ENCODE measurements at regions of chr6 and their contacts with region 1.

Region 1: DNA sequence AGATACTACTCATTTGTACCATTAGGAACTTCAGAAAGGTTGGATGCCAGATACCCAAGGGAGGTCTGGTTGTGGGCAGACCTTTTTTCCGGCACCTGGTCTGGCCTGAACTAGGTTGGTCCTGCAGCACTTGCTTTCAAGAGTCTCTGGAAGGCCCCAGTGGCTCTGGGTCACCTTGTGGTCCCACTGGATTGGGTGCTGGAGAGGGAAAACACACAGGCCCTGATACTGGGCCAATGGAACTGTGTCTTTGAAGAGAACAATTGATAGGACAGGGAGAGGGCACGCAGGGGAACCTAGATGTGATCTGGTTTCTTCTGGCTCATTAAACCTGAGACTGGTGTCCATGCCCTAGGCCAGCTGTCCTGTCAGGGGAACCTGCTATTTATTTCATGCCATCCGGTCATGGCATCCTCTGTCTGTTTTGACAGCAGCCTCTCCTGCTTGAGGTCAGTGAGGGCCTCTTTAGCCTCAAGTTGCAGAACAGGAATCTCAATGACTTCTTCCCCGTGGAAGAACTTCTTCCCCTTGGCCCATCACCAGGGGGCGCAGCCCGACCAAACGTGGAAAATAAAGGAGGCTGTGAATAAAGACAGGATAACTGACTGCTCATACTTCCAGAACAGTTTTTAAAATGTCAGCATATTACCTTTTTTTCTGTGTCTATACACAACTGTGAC is 25.0 kb downstream of the TAF8 start:
- DNase-seq: peak; percentile 69
- ATAC-seq: peak; percentile 93
- H3K4me3 ChIP-seq: no peak overlapping the region
- H3K27ac ChIP-seq: no peak overlapping the region
- H3K4me1 ChIP-seq: no peaks in the 10 kb centered on the region
- H3K27me3 ChIP-seq: no peaks in the 10 kb centered on the region
- CTCF ChIP-seq: peak; percentile 96
- POLR2A ChIP-seq: no peak
- RAD21 ChIP-seq: peak; percentile 96

Region 2: DNA sequence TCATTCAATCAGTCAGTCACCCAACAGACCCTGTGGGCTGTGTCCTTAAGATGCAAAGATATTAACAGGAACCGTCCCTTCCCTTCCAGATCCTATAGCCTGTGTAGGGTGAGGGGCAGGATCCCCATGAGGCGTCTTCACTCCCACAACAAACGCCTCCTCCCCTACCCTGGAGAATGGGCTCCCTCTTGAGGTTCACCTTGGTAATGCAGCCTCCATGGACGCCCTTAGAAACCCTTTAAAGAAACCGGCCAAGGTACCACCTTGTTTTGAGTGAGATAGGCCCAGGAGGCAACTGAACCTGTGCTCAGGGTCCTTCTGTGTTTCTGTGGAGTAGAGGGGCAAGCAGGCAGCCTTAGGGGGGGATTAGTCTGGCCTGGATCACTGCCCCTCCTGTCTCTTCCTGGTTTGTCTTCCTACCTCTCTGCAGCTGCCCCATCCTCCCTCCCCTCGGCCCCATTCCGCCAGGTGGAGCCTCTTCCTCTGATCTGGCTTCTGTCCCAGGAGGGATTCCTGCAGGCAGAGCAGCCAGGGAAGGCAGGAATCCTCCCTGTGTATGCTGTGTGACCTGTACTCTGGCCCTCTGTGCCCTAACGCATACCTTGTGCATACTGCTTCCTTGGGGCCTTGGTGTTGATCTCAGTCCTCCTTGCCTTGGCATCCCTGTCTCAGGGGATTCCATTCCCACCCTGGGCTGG is 91.3 kb after region 1 on chr6:
- CTCF ChIA-PET with region 1: interaction called, 3 read pairs
- POLR2A ChIA-PET with region 1: no interaction called
- dilution Hi-C with region 1: no loop called
- in situ Hi-C with region 1: loop called (anchors 5 kb)
- intact Hi-C with region 1: loop called (anchors 1 kb)
- DNase-seq: peak; percentile 55
- ATAC-seq: peak; percentile 89
- H3K4me3 ChIP-seq: no peak overlapping the region
- H3K27ac ChIP-seq: no peak overlapping the region
- H3K4me1 ChIP-seq: peaks cover 9% of the 10 kb centered on the region
- H3K27me3 ChIP-seq: no peaks in the 10 kb centered on the region
- CTCF ChIP-seq: peak; percentile 94
- POLR2A ChIP-seq: peak; percentile 50; the same call in 1 of the 2 replicates
- RAD21 ChIP-seq: peak; percentile 97

Region 3: DNA sequence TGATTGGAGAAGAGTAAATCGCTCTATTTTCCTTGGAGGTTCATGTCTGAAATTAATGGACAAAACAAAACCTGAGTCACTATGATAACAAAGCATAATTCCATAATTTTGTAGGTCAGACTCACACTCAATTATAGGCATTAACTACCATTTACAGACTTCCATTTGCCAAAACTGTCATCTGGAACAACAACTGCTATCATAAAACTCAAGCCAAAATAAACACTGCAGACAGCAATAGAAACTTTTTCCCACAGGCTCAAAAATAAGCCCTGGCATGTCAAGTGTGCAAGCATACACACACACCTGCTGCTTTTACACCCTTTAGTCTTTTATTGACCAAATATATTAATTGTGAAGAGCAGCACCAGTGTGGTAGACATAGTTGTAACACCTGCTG is 135.3 kb after region 1 on chr6:
- CTCF ChIA-PET with region 1: no interaction called
- POLR2A ChIA-PET with region 1: no interaction called
- dilution Hi-C with region 1: no loop called
- in situ Hi-C with region 1: loop called (anchors 5 kb)
- intact Hi-C with region 1: loop called (anchors 1 kb)
- DNase-seq: no peak
- ATAC-seq: no peak
- H3K4me3 ChIP-seq: no peak overlapping the region
- H3K27ac ChIP-seq: no peak overlapping the region
- H3K4me1 ChIP-seq: no peaks in the 10 kb centered on the region
- H3K27me3 ChIP-seq: no peaks in the 10 kb centered on the region
- CTCF ChIP-seq: no peak
- POLR2A ChIP-seq: no peak
- RAD21 ChIP-seq: no peak

Region 4: DNA sequence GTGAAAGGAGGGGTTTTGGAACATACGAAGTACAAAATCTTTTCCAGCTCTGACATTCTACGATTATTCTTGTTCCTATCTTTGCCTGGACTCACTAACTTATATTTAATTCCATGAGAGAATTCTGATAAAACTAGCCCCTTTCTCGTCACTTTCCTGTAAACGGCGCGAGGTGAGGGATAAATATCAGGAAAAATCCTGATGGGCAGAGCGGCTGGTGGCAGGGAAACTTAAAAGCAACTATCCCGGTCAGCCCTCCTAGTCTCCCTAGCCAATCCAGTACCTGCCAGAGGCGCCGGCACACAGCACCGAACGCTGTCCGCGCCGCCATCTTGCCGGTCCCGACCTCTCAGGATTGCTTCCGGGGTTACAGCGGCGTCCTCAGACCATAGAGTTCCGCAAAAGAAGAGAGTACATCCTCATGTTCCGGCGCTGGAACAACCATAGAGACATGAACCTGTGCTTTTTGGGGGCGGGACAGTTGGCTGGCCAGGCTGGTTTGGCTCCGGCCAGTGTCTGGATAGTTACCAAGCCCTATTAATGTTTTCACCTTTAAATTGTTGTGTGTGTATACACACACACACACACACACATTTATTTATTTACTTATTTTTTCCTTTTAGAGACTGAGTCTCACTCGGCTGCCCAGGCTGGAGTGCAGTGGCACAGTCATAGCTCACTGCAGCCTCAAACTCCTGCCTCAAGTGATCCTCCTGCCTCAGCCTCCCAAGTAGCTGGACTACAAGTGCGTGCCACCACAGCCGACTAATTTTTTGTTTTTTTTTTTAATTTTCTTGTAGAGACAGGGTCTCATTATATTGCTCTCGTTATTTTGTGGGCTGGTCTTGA is 142.4 kb after region 1 on chr6 and contains the start of gene MRPS10:
- CTCF ChIA-PET with region 1: no interaction called
- POLR2A ChIA-PET with region 1: no interaction called
- dilution Hi-C with region 1: no loop called
- in situ Hi-C with region 1: loop called (anchors 5 kb)
- intact Hi-C with region 1: loop called (anchors 1 kb)
- DNase-seq: peak; percentile 94
- ATAC-seq: peak; percentile 98
- H3K4me3 ChIP-seq: peak within 1 kb of the TSS; percentile 82
- H3K27ac ChIP-seq: peak within 1 kb of the TSS; percentile 83
- H3K4me1 ChIP-seq: peaks cover 2% of the 10 kb centered on the region; the same call in 1 of the 2 replicates
- H3K27me3 ChIP-seq: no peaks in the 10 kb centered on the region
- CTCF ChIP-seq: no peak
- POLR2A ChIP-seq: peak; percentile 85
- RAD21 ChIP-seq: no peak
- total RNA-seq, gene MRPS10: 47.0 and 71.1 TPM in 2 replicates

Region 5: DNA sequence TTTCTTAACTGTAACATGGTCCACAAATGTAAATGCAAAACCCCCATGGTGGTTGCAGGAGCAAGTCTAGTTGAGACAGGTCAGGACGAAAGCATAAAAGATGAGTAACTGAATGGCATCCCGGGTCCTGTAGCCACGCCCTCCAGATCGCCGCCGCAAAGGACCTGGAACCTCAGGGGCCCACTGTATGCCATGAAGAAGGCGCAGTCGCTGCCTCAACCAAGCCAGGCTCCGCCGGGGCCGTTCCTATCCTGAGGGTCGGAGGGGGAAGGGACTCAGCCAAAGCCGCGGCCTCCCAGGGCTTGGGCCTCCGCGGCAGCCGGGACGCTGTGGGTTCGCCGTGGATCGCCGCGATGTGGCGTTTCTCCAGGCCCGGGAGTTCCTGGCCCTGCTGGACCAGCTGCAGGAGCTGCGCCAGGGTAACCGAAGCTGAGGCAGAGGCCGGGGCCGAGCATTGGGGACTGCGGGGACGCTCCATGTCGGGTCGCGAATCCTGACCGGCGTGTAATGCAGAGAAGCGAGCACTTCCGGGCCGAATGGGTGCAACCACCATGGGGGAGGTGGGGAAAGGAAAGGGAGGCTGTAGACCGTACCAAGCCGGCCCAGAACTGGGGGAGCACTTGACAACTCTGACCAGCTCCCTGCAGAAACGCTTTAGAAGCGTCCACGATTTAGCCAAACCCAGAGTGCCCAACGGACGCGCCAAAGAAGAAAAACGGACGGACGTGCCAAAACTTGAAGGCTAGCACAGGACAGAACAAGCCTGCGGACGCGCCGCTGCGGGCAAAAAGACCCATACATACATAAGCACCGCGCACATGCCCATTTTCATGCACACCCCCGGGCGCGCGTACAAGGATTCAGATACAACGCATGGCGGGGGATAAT is 815.3 kb after region 1 on chr6:
- CTCF ChIA-PET with region 1: no interaction called
- POLR2A ChIA-PET with region 1: no interaction called
- dilution Hi-C with region 1: no loop called
- in situ Hi-C with region 1: loop called (anchors 25 kb)
- intact Hi-C with region 1: loop called (anchors 10 kb)
- DNase-seq: peak; percentile 97
- ATAC-seq: peak; percentile 97
- H3K4me3 ChIP-seq: peak overlapping the region; percentile 66
- H3K27ac ChIP-seq: peak overlapping the region; percentile 87
- H3K4me1 ChIP-seq: peaks cover 3% of the 10 kb centered on the region; the same call in 1 of the 2 replicates
- H3K27me3 ChIP-seq: no peaks in the 10 kb centered on the region
- CTCF ChIP-seq: no peak
- POLR2A ChIP-seq: peak; percentile 91
- RAD21 ChIP-seq: no peak